ENCODE measurements at regions of chr11 and their contacts with region 1.

Region 1: DNA sequence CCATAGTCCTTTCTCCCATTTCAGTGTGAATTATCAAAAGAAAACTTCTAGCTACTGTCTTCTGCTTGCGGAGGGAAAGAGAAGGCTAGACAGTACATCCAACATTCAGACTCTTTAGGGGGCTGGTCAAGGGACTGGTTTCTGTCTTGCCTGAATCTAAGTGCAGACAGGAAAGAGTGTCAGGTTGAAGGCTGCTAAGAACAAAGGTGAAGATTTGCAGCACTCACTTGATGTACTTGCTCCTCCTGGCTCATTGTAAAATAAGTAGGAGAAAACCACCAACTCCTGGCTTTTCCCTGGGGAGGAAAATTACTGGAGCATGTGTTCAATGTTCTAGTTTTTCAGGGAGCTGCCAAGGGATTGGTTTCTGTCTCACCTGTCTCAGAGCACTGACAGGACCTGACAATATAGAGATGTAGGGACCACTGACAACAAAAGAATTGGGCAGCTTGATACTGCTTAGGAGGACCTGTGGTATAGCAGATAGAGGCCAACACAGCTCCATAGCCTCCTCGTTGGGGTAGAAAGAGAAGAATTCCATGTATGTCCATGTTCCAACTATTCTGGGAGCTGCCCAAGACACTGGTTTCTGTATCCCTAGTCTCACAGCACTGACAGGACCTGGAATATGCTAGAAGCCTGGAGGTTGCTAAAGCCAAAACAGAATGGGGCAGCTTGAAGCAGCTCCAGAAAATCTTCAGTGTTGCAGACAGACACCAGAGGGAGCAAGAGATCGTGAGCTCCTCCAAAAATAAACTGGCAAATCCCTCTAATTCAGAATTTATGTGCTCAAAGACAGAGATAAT is 39.7 kb upstream of the MMP12 start:
- DNase-seq: peak; percentile 53
- H3K4me3 ChIP-seq: no peak overlapping the region
- H3K27ac ChIP-seq: no peak overlapping the region
- H3K4me1 ChIP-seq: no peaks in the 10 kb centered on the region
- H3K27me3 ChIP-seq: no peaks in the 10 kb centered on the region
- CTCF ChIP-seq: peak; percentile 47 to 70
- POLR2A ChIP-seq: no peak

Region 2: DNA sequence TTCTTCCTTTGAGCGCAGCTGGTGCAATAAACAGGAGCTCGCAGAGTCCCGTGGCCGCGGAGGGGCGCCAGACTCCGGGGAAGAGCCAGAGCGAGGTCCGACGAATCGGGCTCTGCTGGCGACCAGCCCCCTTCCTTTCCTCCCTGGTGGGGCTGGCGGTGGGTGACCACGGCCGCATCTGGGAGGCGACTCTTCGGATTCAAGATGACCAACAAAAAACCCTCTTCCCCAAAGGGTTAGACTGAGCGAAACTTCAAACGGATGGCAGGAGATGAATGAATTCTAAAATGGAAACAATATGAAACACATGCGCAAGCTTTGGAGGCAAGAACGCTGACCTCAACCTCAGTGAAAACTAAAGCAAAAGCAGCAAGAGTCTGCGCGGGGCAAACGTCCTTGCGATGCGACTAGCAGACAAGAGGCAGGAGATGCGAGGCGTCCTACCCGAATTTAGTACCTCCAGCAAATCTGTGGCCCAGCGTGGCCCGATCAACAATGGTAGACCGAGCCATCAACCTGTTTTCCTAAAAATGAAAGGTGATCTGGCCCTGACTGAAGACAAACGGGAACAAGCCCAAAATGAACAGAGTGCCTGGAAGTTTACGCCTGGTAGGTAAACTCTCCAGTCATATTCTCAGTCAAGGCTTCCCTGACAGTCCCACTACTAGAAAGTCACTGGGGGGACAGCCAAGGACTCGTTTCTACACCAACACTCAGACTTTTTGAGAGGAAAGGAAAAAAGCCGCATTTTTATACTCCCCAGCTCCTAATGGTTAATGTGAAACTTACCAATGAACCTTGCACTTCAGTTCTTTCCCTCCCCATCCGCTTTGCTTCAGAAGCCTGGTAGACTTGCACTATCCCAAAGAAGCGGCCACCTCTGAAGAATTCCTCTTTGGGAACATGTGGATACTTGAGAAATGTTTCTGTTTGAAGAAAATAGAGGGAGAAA is 82.7 kb before region 1 on chr11:
- CTCF ChIA-PET with region 1: interaction called, 17 read pairs
- POLR2A ChIA-PET with region 1: no interaction called
- dilution Hi-C with region 1: no loop called
- intact Hi-C with region 1: no loop called
- DNase-seq: peak; percentile 63
- H3K4me3 ChIP-seq: peak overlapping the region in 2 of 3 experiments; percentile 15 to 40
- H3K27ac ChIP-seq: no peak overlapping the region
- H3K4me1 ChIP-seq: no peaks in the 10 kb centered on the region
- H3K27me3 ChIP-seq: peaks cover 5 to 13% of the 10 kb centered on the region in 2 experiments
- CTCF ChIP-seq: peak; percentile 62 to 71
- POLR2A ChIP-seq: no peak

Region 3: DNA sequence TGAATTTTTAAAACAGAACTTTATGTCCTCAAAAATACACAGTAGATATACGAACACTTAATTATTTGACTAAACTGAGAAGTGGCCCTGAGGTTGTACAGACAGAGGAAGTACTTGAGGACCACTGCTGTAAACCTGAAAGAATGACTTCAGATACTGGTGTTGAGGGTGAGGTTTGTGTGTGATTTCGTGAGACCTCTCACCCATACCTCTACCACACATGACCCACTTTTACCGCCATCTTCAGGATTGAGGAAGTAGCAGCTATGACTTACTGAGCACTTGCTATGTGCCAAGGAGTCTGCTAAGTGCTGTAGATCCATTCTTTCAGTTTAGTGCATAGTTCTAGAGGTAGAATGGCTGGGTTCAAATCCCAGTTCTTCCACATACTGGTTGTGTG is 19.2 kb after region 1 on chr11:
- CTCF ChIA-PET with region 1: interaction called, 31 read pairs
- POLR2A ChIA-PET with region 1: no interaction called
- dilution Hi-C with region 1: no loop called
- intact Hi-C with region 1: no loop called
- DNase-seq: no peak
- H3K4me3 ChIP-seq: no peak overlapping the region
- H3K27ac ChIP-seq: no peak overlapping the region
- H3K4me1 ChIP-seq: no peaks in the 10 kb centered on the region
- H3K27me3 ChIP-seq: peaks cover 0 to 2% of the 10 kb centered on the region in 2 experiments
- CTCF ChIP-seq: no peak
- POLR2A ChIP-seq: no peak

Region 4: GRCh38 chr11:102946237-102946636 is 31.8 kb after region 1 on chr11:
- CTCF ChIA-PET with region 1: interaction called, 53 read pairs
- POLR2A ChIA-PET with region 1: no interaction called
- dilution Hi-C with region 1: no loop called
- intact Hi-C with region 1: loop called (anchors 1 kb)
- DNase-seq: no peak
- H3K4me3 ChIP-seq: no peak overlapping the region
- H3K27ac ChIP-seq: no peak overlapping the region
- H3K4me1 ChIP-seq: peaks cover 5% of the 10 kb centered on the region
- H3K27me3 ChIP-seq: no peaks in the 10 kb centered on the region
- CTCF ChIP-seq: no peak
- POLR2A ChIP-seq: no peak

Region 5: GRCh38 chr11:103055221-103055890 is 140.9 kb after region 1 on chr11:
- CTCF ChIA-PET with region 1: interaction called, 64 read pairs
- POLR2A ChIA-PET with region 1: no interaction called
- dilution Hi-C with region 1: no loop called
- intact Hi-C with region 1: loop called (anchors 1 kb)
- DNase-seq: peak; percentile 54
- H3K4me3 ChIP-seq: no peak overlapping the region
- H3K27ac ChIP-seq: no peak overlapping the region
- H3K4me1 ChIP-seq: no peaks in the 10 kb centered on the region
- H3K27me3 ChIP-seq: no peaks in the 10 kb centered on the region
- CTCF ChIP-seq: peak; percentile 43 to 45
- POLR2A ChIP-seq: no peak